Cardiac septum (tissue), 1 donor: ENCODE measurements at regions of chr13 and their contacts with region 1.

Region 1: DNA sequence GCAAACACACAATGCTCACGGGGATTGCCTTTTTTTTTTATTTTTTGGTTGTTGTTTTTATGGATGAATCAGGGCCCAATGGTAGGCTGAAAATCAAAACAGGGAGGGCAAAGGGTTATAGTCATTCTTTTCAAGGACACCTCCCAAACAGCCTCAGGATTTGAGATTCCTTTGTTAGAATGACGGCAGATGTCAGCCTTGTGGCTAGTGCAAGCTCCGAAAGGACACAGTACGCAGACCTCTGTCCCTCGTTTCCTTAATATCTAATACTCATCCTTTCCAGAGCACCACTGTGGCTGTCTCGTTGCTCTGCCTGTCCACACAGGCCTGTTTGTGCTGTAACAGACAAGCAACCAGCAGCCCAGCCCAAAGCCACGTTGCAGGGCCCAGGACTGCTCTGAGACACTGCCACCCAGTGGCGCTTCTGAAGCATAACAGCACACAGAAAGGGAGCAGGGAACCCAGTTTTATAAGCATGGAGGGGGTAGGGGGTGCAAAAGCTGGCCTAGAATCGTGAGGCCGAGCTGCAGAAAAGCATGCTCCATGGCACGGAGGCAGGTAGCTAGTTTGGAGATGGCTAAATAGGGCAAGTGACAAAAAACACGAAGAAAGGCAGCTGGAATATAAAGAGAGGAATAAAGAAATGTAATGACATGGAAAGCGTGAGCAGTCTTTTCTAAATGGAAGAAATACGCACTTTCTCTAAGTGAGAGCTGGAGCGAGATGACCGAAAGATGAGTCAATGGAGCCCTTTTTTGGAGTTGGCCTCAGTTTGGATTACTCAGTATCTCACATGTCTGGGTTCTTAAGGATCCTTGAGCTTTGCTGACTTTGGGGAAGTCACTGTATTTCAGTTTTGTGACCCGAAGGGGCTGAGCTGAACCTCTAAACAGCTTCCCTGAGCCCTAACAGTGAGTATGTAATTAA is 40.7 kb upstream of the MEDAG start:
- DNase-seq: peak; percentile 86

Region 2: DNA sequence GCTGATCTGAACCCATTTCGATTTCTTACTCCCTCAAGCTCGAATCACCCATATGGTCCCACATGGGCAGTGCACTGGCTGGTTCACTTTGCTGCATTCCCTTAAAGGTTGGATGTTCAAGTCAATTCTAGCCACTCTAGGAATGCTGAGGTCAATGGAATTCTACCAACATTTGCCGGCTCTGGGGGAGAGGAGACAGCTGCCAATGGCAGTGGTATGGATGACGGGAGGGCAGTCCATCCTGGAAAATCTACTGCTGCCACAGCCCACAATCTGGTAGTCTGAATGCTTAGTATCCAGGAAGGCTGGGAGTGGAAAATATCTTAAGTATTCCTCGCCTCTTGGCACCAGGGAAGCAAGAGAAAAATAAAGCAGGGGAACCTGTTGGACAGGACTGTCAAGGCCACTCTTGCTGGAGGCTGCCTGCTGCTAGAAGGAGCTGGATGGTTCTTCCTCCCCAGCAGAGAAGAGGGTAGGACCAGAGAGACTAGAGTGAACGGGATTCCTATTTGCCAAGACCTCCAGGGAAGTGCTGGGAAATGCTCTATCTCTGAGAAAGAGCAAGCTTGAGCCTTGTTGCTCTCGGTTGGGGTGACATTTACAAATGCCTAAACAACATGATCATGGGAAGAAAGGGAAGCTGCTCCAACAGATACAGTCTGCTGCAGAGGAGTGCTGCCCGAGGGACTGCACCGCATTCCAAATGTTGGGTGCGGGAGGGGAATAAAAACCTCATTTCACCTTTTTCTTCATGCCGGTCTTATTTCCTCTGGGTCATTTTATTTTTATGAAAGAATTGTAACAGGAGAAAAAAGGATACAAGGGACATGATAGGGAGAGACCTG is 378.9 kb before region 1 on chr13:
- intact Hi-C with region 1: no loop called
- DNase-seq: no peak

Region 3: GRCh38 chr13:30673669-30674521 is 191.5 kb before region 1 on chr13:
- intact Hi-C with region 1: loop called (anchors 5 kb)
- DNase-seq: peak; percentile 95

Region 4: DNA sequence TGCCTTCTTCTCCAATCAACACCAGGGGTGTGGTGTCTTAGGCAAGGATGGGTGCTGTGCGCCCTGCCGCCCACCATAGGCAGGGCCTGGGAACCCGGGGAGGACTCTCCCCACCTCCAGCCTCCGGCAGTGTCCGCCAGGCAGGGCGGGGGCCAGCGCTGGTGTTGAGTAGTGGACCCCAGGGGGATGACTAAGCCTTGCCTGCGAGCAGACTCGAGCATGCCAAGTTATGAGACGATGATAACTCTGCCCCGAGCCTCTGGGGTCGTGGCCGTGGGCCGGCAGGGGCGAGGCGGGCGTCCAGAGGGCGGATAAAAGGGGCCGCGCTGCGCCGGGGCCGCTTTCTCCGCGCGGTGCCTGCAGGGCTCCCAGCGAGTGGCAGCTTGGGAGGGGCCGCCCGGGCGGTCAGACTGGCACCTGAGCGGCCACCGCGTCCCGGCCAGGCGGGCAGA is 40.6 kb after region 1 on chr13 and contains the start of gene MEDAG:
- intact Hi-C with region 1: loop called (anchors 5 kb)
- DNase-seq: peak; percentile 86
- total RNA-seq, gene MEDAG: 11.7 TPM

Region 5: DNA sequence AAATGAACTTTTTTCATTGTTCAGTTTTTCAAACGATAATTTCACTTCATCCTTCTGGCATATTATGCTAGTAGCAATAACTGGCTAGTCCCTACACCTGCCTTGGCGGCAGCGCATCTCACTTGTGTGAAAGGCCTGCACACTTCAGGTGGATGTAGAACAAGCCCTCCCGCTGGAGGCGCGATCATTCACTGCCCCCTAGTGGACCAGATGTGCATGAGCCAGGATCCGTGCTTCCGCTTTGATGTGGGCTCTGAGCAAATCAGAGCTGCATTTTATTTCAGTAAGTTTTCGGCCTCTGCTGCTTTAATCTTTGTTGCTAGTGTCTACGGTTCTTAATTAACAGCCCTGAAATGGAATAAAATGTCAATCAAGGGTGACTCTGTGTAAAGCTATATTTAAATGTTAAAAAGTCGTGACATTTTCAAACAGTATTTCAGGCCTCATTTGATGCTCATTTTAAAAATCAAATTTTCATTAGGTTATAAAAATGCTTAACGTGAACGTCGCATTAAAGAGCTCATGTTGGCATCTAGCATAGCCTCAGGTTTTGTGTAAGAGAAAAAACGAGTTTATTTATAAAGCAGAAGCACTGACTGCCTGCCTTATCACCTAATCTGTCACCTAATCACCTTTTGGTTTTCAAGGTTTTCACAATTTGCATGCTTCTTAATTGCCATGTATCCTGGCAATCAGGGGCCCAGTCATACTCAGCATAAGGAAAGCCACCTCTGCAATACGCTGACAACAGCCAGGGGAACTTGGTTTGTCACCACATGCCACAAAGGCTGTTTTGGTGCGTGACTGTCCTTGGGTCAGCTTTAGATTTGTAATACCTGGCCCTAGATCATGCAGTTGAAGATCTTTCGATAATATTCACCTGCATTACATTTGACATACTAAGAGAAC is 179.2 kb after region 1 on chr13:
- intact Hi-C with region 1: loop called (anchors 10 kb)
- DNase-seq: peak; percentile 88